Mammary epithelial cell (primary cell): ENCODE measurements at regions of chr6 and their contacts with region 1.

Region 1: GRCh38 chr6:114304304-114304887 is 38.4 kb downstream of the HS3ST5 start:
- DNase-seq: peak; percentile 1
- H3K4me3 ChIP-seq: no peak overlapping the region
- H3K27ac ChIP-seq: no peak overlapping the region
- H3K4me1 ChIP-seq: no peaks in the 10 kb centered on the region
- H3K27me3 ChIP-seq: no peaks in the 10 kb centered on the region
- CTCF ChIP-seq: peak; percentile 41 to 53

Region 2: DNA sequence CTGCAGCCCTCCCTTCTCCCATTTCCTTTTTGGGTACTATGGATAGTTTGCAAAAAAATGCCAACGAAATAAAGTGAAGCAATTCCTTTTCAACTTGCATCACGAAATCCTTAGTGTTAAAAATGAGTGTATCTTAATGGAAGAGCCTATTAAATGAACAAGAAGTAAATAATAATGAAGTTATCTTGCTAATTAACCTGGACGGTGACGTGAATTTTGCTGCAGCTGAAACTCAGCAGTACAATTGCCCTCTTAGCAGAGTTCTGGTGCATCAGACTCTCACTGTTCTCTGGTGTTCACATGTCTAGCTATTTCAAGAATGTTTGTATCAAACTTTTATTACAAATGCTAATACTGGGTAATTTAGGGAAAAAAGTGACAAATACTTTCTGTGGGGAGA is 213.8 kb before region 1 on chr6:
- CTCF ChIA-PET with region 1: no interaction called
- dilution Hi-C with region 1: no loop called
- in situ Hi-C with region 1: no loop called
- intact Hi-C with region 1: loop called (anchors 2 kb)
- DNase-seq: no peak
- H3K4me3 ChIP-seq: no peak overlapping the region
- H3K27ac ChIP-seq: no peak overlapping the region
- H3K4me1 ChIP-seq: no peaks in the 10 kb centered on the region
- H3K27me3 ChIP-seq: peaks cover 4% of the 10 kb centered on the region
- CTCF ChIP-seq: no peak

Region 3: GRCh38 chr6:114096561-114097172 is 207.7 kb before region 1 on chr6:
- CTCF ChIA-PET with region 1: no interaction called
- dilution Hi-C with region 1: no loop called
- in situ Hi-C with region 1: no loop called
- intact Hi-C with region 1: loop called (anchors 2 kb)
- DNase-seq: no peak
- H3K4me3 ChIP-seq: no peak overlapping the region
- H3K27ac ChIP-seq: no peak overlapping the region
- H3K4me1 ChIP-seq: no peaks in the 10 kb centered on the region
- H3K27me3 ChIP-seq: peaks cover 4% of the 10 kb centered on the region
- CTCF ChIP-seq: peak; percentile 57 to 68